Psoas muscle (tissue), 8 donors: ENCODE measurements at regions of chr3 and their contacts with region 1.

Region 1: GRCh38 chr3:171339598-171339997 is 120.6 kb downstream of the TNIK start:
- DNase-seq: no peak
- ATAC-seq: no peak
- H3K4me3 ChIP-seq: no peak overlapping the region
- H3K27ac ChIP-seq: no peak overlapping the region
- H3K4me1 ChIP-seq: peaks cover 29% of the 10 kb centered on the region
- H3K27me3 ChIP-seq: no peaks in the 10 kb centered on the region
- CTCF ChIP-seq: no peak

Region 2: GRCh38 chr3:171383206-171384018 is 43.8 kb after region 1 on chr3:
- intact Hi-C with region 1: loop called in 1 of 2 experiments (anchors 5 kb)
- DNase-seq: no peak
- ATAC-seq: peak in 1 of 4 donors; percentile 40
- H3K4me3 ChIP-seq: no peak overlapping the region
- H3K27ac ChIP-seq: no peak overlapping the region
- H3K4me1 ChIP-seq: peaks cover 49% of the 10 kb centered on the region
- H3K27me3 ChIP-seq: no peaks in the 10 kb centered on the region
- CTCF ChIP-seq: no peak

Region 3: DNA sequence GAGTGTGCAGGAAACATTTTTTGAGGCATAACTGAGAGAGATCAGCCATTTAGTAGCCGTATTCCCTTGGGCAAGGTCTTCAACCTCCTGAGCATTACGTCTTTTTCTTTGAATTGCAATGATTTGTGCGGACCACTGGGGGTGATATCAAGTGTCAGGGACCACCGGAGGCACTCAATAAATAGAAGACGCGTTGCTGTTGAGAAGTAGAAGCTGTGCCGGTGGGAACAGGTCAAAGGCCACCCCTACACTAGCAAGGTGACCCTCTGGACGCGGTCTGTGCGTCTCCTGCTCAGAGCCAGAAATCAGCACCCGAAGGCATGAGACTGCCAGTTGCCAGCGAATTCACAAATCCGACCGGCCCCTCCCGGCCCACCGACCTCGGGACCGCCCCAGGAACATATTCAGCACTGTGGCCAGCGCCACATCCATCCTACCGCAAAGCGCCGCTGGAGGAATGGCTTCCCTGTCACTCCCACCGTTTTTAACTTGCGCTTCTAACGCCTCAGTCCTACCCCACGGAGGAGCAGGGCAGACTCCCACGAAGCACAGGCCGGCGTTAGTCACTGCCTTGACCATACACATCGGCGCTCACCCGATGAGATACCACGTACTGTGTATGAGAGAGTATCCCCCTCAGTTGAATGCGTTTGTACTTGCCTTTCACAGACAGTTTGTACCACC is 1110.0 kb after region 1 on chr3:
- intact Hi-C with region 1: no loop called
- DNase-seq: peak; percentile 22 to 65
- ATAC-seq: peak in 2 of 4 donors; percentile 61 to 68
- H3K4me3 ChIP-seq: no peak overlapping the region
- H3K27ac ChIP-seq: no peak overlapping the region
- H3K4me1 ChIP-seq: no peaks in the 10 kb centered on the region
- H3K27me3 ChIP-seq: peaks cover 4 to 52% (median 23%) of the 10 kb centered on the region in 3 donors
- CTCF ChIP-seq: no peak